IMR-90 (cell line): ENCODE measurements at regions of chr19 and their contacts with region 1.

Region 1: GRCh38 chr19:17859533-17860330 is at the start of gene RPL18A:
- DNase-seq: peak; percentile 100
- ATAC-seq: peak; percentile 93
- H3K4me3 ChIP-seq: peak within 1 kb of the TSS; percentile 71
- H3K27ac ChIP-seq: peak within 1 kb of the TSS; percentile 36
- H3K4me1 ChIP-seq: peaks cover 7% of the 10 kb centered on the region
- H3K27me3 ChIP-seq: no peaks in the 10 kb centered on the region
- CTCF ChIP-seq: peak; percentile 95
- POLR2A ChIP-seq: peak; percentile 98
- RAD21 ChIP-seq: peak; percentile 60
- total RNA-seq, gene RPL18A: 1,241 and 1,351 TPM in 2 replicates

Region 2: DNA sequence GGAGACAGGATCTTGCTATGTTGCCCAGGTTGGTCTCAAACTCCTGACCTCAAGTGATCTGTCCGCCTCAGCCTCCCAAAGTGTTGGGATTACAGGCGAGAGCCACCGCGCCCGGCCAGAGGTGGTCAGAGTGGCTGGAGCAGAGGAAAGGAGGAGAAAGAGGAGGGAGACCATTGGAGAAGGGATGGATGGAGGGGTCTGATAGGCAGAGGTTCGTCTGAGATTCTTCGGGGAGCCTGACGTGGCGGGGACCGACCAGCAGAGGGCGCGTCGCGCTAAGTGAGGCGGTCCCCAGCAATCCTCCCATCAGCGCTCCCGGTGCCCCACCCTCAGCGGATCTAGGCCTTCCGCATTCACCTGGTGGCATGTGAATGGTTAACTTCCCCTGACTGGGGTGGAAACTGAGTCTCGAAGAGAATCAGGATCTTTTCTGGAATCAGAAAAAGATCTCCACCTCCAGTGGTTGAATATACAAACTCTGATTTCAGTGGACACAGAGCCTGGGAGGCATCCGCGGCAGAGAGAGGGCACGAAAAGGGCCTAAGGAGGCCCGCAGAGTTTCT is 513.5 kb before region 1 on chr19:
- CTCF ChIA-PET with region 1: no interaction called
- POLR2A ChIA-PET with region 1: no interaction called
- dilution Hi-C with region 1: no loop called
- in situ Hi-C with region 1: no loop called
- intact Hi-C with region 1: loop called (anchors 2 kb)
- DNase-seq: peak; percentile 42
- ATAC-seq: peak; percentile 98
- H3K4me3 ChIP-seq: no peak overlapping the region
- H3K27ac ChIP-seq: no peak overlapping the region
- H3K4me1 ChIP-seq: 0 out of 2 replicates have a peak, but pooled peaks cover 2% of the 10 kb centered on the region
- H3K27me3 ChIP-seq: peaks cover 2% of the 10 kb centered on the region; the same call in 1 of the 2 replicates
- CTCF ChIP-seq: peak; percentile 90
- POLR2A ChIP-seq: no peak
- RAD21 ChIP-seq: peak; percentile 80

Region 3: DNA sequence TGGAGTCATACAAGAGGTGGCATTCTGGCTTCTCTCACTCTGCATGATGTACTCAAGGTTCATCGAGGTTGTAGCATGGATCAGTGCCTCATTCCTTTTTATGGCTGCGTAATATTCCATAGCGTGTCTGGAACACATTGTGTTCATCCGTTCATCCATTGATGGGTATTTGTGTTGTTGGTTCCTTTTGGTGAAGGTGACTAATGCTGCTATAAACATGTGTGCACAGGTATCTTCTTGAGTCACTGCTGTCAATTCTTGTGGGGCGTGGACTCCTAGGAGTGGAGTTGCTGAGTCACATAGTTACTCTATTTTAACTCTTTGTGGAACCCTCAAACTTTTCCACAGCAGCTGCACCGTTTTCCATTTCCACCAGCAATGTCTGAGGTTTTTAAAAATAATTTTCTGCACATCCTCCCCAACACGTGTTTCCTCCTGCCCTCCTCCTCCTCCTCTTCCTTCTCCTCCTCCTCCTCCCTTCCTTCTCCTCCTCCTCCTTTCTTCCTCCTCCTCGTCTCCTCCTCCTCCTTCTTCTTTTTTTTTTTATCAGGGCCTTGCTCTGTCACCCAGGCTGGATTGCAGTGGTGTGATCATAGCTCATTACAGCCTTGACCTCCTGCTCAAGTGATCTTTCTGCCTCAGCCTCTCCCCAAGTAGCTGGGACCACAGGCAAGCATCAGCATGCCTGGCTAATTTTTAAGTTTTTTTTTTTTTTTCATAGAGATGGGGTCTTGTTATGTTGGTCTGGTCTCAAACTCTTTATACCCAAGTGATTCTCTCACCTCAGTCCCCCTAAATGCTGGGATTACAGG is 409.3 kb before region 1 on chr19:
- CTCF ChIA-PET with region 1: no interaction called
- POLR2A ChIA-PET with region 1: no interaction called
- dilution Hi-C with region 1: no loop called
- in situ Hi-C with region 1: loop called (anchors 10 kb)
- intact Hi-C with region 1: loop called (anchors 10 kb)
- DNase-seq: no peak
- ATAC-seq: no peak
- H3K4me3 ChIP-seq: no peak overlapping the region
- H3K27ac ChIP-seq: no peak overlapping the region
- H3K4me1 ChIP-seq: no peaks in the 10 kb centered on the region
- H3K27me3 ChIP-seq: peaks cover 22% of the 10 kb centered on the region
- CTCF ChIP-seq: no peak
- POLR2A ChIP-seq: no peak
- RAD21 ChIP-seq: no peak

Region 4: DNA sequence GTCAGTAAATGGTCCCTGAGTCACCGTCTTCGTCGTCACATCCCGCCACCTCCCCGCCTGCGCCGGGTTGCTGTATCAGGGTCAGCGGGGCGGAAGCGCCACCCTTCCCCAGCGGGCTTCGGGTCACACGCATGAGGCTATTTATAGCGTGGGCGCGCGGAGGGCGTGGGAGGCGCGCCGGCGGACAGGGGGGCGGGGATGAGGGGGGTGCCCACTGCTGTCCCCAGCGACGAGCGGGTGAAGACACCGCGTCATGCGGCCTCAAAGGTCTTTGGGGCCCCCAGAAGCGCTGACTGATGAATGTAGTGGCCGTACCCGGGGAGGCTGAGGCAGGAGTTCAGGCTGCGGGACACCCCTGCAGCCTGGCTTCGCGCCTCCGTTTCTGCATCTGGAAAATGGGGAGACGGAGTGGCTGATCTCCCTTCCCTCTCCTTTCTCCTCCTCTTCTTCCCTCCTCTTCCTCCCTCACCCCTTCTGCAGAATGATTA is 179.5 kb before region 1 on chr19:
- CTCF ChIA-PET with region 1: no interaction called
- POLR2A ChIA-PET with region 1: no interaction called
- dilution Hi-C with region 1: no loop called
- in situ Hi-C with region 1: no loop called
- intact Hi-C with region 1: no loop called
- DNase-seq: peak; percentile 62
- ATAC-seq: peak; percentile 86
- H3K4me3 ChIP-seq: peak overlapping the region; percentile 0; the same call in 1 of the 2 replicates
- H3K27ac ChIP-seq: no peak overlapping the region
- H3K4me1 ChIP-seq: peaks cover 5% of the 10 kb centered on the region
- H3K27me3 ChIP-seq: peaks cover 2% of the 10 kb centered on the region; the same call in 1 of the 2 replicates
- CTCF ChIP-seq: no peak
- POLR2A ChIP-seq: no peak; the same call in 1 of the 2 replicates
- RAD21 ChIP-seq: no peak

Region 5: GRCh38 chr19:17739121-17739875 is 120.4 kb before region 1 on chr19:
- CTCF ChIA-PET with region 1: no interaction called
- POLR2A ChIA-PET with region 1: no interaction called
- dilution Hi-C with region 1: no loop called
- in situ Hi-C with region 1: no loop called
- intact Hi-C with region 1: no loop called
- DNase-seq: no peak
- ATAC-seq: no peak; the same call in 1 of the 2 replicates
- H3K4me3 ChIP-seq: no peak overlapping the region
- H3K27ac ChIP-seq: no peak overlapping the region
- H3K4me1 ChIP-seq: peaks cover 4% of the 10 kb centered on the region
- H3K27me3 ChIP-seq: no peaks in the 10 kb centered on the region
- CTCF ChIP-seq: no peak
- POLR2A ChIP-seq: no peak
- RAD21 ChIP-seq: no peak

Region 6: GRCh38 chr19:17784201-17785008 is 75.3 kb before region 1 on chr19:
- CTCF ChIA-PET with region 1: no interaction called
- POLR2A ChIA-PET with region 1: no interaction called
- dilution Hi-C with region 1: no loop called
- in situ Hi-C with region 1: no loop called
- intact Hi-C with region 1: loop called (anchors 10 kb)
- DNase-seq: peak; percentile 36
- ATAC-seq: peak; percentile 95
- H3K4me3 ChIP-seq: no peak overlapping the region
- H3K27ac ChIP-seq: no peak overlapping the region
- H3K4me1 ChIP-seq: no peaks in the 10 kb centered on the region
- H3K27me3 ChIP-seq: peaks cover 2% of the 10 kb centered on the region; the same call in 1 of the 2 replicates
- CTCF ChIP-seq: peak; percentile 69
- POLR2A ChIP-seq: no peak
- RAD21 ChIP-seq: peak; percentile 57

Region 7: GRCh38 chr19:17996826-17997316 is 137.1 kb after region 1 on chr19:
- CTCF ChIA-PET with region 1: no interaction called
- POLR2A ChIA-PET with region 1: interaction called, 3 read pairs
- dilution Hi-C with region 1: no loop called
- in situ Hi-C with region 1: no loop called
- intact Hi-C with region 1: loop called (anchors 5 kb)
- DNase-seq: peak; percentile 52
- ATAC-seq: peak; percentile 85
- H3K4me3 ChIP-seq: no peak overlapping the region
- H3K27ac ChIP-seq: no peak overlapping the region
- H3K4me1 ChIP-seq: no peaks in the 10 kb centered on the region
- H3K27me3 ChIP-seq: peaks cover 2% of the 10 kb centered on the region; the same call in 1 of the 2 replicates
- CTCF ChIP-seq: peak; percentile 98
- POLR2A ChIP-seq: 0 out of 2 replicates have a peak, but pooled peaks have one; percentile 37
- RAD21 ChIP-seq: peak; percentile 96